Right lobe of liver (tissue), 6 donors: ENCODE measurements at regions of chr5 and their contacts with region 1.

Region 1: DNA sequence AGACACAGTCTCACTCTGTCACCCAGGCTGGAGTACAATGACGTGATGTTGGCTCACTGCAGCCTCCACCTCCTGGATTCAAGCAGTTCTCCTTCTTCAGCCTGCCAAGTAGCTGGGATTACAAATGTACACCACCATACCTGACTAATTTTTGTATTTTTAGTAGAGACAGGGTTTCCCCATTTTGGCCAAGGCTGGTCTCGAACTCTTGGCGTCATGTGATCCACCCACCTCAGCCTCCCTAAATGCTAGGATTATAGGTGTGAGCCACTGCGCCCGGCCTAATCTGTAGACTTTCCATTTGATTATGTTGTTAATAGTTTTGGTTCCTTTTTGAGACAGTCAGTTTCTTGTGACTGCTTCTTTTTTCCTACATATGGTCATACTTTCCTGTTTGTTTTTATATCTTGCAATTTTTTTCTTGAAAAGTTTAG is 31.0 kb downstream of the MTREX start:
- DNase-seq: no peak
- ATAC-seq: peak; percentile 39 to 58 (median 49)
- H3K4me3 ChIP-seq: no peak overlapping the region
- H3K27ac ChIP-seq: peak overlapping the region in 2 of 3 donors; percentile 3 to 57
- H3K4me1 ChIP-seq: peaks cover 0 to 10% (median 0%) of the 10 kb centered on the region in 4 donors
- H3K27me3 ChIP-seq: no peaks in the 10 kb centered on the region
- CTCF ChIP-seq: no peak
- POLR2A ChIP-seq: no peak

Region 2: DNA sequence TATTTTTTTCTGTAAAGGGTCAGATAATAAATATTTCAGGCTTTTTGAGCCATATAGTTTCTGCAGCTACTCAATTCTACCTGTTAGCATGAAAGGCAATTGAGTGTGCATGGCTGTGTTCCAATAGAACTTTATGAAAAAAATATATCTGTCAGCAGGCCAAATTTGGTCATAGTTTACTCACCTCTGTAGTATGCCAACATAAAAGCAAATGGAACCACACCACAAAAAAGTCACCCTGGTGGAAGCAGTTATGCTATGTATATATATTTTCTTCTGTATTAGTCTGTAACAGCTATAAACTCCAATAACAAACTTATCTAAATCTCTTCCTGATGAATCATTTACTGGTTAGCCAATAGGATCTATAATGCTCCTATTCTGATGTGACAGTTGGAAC is 369.9 kb after region 1 on chr5:
- intact Hi-C with region 1: loop called in 1 of 2 experiments (anchors 10 kb)
- DNase-seq: no peak
- ATAC-seq: no peak
- H3K4me3 ChIP-seq: no peak overlapping the region
- H3K27ac ChIP-seq: no peak overlapping the region
- H3K4me1 ChIP-seq: peaks cover 0 to 5% (median 3%) of the 10 kb centered on the region in 4 donors
- H3K27me3 ChIP-seq: no peaks in the 10 kb centered on the region
- CTCF ChIP-seq: no peak
- POLR2A ChIP-seq: no peak